ENCODE measurements at regions of chr19 and their contacts with region 1.

Region 1: DNA sequence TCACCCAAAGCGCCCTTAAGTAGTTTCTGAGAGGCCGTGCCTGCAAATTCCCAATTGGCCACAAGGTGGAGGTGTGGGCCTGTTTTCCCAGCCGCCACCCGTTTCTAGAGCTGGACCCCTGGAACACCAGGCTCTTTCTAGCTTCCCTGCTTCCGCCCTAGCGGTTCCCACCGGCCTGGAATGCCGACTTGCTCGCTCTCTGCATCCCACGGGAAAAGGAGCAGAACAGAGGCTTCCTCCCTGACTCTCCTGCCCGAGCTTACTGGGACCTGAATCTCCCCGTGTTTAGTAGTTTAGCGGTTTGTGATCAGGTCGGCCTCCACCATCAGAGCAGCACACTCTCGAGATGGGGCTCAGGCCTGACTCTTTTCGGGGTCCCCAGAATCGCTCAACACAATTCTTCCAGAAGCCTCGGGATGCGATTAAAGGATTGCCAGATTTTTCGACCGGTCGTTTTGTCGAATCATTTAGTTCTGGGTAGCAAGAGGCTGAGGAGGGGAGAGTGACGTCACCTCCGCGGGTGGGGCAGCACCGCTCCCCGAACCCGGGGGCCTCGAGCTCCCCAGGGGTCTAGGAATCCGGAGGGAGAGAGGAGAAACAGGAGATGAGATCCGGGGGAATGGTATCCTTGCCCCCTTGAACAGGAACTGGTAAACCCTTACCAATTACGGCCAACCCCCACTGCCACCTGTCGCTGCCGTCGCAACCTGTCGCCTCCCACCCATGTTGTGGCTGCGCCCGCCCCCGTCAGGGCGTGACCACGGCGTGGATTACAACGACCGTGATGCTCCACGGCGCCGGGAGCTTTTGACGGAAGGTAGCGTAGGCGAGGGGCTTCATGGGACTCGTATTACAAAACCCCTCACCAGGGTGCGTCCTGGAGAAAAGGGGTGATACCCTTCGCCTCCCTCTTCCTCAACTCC is 8.0 kb downstream of the NAPSA start:
- DNase-seq: peak; percentile 76

Region 2: GRCh38 chr19:50401605-50402450 is 44.4 kb after region 1 on chr19:
- in situ Hi-C with region 1: no loop called
- DNase-seq: no peak

Region 3: DNA sequence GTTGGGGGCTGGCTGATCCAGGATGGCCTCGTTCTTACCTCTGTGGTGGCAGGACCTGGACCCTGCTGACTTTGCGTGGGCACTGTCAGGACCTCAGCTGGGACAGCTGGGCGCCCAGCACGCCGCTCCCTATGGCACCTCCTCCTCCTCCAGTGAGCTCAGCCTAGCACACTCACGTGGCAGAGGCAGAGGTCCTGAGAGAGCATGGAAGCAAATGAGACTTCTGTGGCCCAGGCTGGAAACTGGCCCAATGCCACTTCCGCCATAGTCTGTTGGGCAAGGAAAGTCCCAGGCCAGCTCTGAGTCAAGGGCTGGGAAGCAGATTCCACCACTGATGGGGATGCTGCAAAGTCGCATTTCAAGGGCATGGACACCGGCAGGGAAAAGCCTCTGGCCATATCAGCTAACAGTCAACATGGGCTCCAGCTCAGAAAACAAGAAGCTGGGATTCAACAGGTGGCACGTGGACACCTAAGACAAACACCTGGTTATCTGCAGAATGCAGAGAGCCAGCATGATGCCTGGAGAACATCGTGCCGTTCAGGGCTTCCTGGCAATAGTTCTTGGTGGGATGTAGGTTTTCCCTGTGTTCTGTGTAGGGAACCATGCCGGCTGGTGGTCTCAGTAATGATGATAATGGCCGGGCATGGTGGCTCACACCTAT is 91.9 kb after region 1 on chr19:
- in situ Hi-C with region 1: no loop called
- DNase-seq: no peak

Region 4: GRCh38 chr19:50794439-50795237 is 437.2 kb after region 1 on chr19:
- in situ Hi-C with region 1: loop called (anchors 25 kb)
- DNase-seq: peak; percentile 69

Measured in KBM-7 (cell line).